CD4-positive, alpha-beta T cell (primary cell): ENCODE measurements at regions of chr18 and their contacts with region 1.

Region 1: DNA sequence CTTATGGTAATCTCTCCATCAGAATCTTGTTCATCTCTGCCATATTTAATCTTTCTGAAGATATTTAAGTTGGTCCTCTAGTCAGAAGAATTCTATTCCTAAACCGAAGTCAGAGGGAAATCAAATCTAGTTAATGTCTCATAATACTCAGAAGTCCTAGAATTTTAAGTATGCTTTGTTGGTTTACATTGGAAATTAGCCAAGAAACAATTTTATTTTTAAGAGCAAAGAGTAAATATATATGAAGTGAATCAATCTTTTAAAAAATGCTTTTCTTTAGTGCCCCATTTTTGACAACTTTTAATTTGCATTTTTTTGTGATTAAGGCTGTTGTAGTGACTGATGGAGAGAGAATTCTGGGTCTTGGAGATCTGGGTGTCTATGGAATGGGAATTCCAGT is 38.1 kb downstream of the ME2 start:
- DNase-seq: no peak
- ATAC-seq: no peak
- H3K4me3 ChIP-seq: no peak overlapping the region
- H3K4me3 Mint-ChIP-seq: no peak overlapping the region
- H3K27ac ChIP-seq: no peak overlapping the region
- H3K27ac Mint-ChIP-seq: no peak overlapping the region
- H3K4me1 ChIP-seq: no peaks in the 10 kb centered on the region
- H3K4me1 Mint-ChIP-seq: peaks cover 6% of the 10 kb centered on the region
- H3K27me3 ChIP-seq: no peaks in the 10 kb centered on the region
- H3K27me3 Mint-ChIP-seq: no peaks in the 10 kb centered on the region
- CTCF ChIP-seq: no peak

Region 2: GRCh38 chr18:50819728-50820378 is 97.2 kb before region 1 on chr18 and contains the start of gene MRO:
- CTCF ChIA-PET with region 1: no interaction called
- POLR2A ChIA-PET with region 1: no interaction called
- intact Hi-C with region 1: loop called in 1 of 2 experiments (anchors 10 kb)
- DNase-seq: peak; percentile 61 to 88 (median 74)
- ATAC-seq: peak; percentile 100
- H3K4me3 ChIP-seq: peak within 1 kb of the TSS; percentile 51
- H3K4me3 Mint-ChIP-seq: no peak within 1 kb of the TSS
- H3K27ac ChIP-seq: no peak within 1 kb of the TSS
- H3K27ac Mint-ChIP-seq: no peak within 1 kb of the TSS
- H3K4me1 ChIP-seq: peaks cover 14% of the 10 kb centered on the region
- H3K4me1 Mint-ChIP-seq: no peaks in the 10 kb centered on the region
- H3K27me3 ChIP-seq: peaks cover 7 to 11% of the 10 kb centered on the region in 2 experiments
- H3K27me3 Mint-ChIP-seq: peaks cover 26% of the 10 kb centered on the region
- CTCF ChIP-seq: peak; percentile 96
- total RNA-seq, gene MRO: not detected

Region 3: DNA sequence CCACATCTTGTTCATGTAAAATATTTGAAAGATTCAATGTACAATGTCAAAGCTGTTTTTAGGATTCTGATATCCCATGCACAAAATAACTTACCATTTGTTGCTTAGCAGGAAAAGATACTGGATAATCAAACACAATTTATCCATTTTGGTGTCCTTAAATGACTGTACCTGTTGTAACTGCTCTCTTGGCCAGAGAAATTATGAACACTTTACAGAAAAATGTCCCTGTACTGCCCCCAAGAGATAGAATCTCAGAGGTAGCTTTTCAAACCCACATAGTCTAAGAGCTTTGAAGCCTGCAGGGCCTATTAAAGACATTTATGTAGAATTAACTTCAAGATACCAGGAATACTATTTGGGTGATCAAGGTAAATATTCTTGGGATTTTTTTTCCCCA is 50.3 kb before region 1 on chr18:
- CTCF ChIA-PET with region 1: no interaction called
- POLR2A ChIA-PET with region 1: no interaction called
- intact Hi-C with region 1: loop called in 1 of 2 experiments (anchors 2 kb)
- DNase-seq: no peak
- ATAC-seq: no peak
- H3K4me3 ChIP-seq: no peak overlapping the region
- H3K4me3 Mint-ChIP-seq: no peak overlapping the region
- H3K27ac ChIP-seq: no peak overlapping the region
- H3K27ac Mint-ChIP-seq: no peak overlapping the region
- H3K4me1 ChIP-seq: no peaks in the 10 kb centered on the region
- H3K4me1 Mint-ChIP-seq: no peaks in the 10 kb centered on the region
- H3K27me3 ChIP-seq: no peaks in the 10 kb centered on the region
- H3K27me3 Mint-ChIP-seq: no peaks in the 10 kb centered on the region
- CTCF ChIP-seq: no peak